ENCODE measurements at regions of chr18 and their contacts with region 1.

Region 1: DNA sequence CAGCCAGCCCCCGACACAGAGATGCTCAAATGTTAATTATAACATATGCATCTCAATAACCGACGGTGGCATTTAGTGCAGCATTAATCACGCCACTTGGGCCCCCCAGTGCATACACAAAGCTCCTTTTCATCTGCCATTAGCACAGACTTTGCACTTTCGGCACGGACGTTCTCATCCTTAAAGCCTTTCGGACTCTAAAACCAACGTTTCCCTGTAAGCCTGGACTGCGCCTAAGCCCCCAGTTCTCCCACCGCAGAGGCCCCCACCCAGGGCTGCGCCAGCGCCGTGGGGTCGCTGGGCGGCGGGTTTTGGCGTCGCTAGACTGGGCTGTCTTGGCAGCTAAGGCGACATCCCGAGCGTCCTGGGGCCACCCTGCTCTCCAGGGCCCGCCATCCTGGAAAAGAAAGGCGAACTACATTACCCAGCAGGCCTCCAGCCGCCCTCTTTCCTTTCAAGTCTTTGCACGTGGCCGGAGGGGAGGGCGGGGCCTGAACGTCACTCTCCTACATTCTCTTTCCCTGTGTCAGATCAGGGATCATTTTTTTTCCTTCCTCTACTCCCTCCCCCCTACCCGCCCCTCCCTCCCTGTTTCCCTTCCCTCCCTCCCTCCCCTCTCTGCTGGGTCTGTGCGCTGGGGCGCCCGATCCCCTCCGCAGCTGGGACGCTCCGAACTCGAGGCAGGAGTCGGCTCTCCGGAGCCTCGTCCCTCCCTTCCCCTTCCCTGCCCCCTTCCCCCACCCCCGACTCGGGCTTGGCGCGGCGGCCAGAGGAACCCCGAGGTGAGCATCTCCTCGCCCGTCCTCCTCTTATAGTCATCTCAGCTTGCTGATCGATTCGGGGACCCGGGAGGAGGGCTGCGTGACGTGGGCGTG is at the start of gene CTIF:
- DNase-seq: peak; percentile 96
- H3K4me3 Mint-ChIP-seq: peak within 1 kb of the TSS; percentile 89
- H3K27ac Mint-ChIP-seq: peak within 1 kb of the TSS; percentile 35
- H3K4me1 Mint-ChIP-seq: no peaks in the 10 kb centered on the region
- H3K27me3 Mint-ChIP-seq: no peaks in the 10 kb centered on the region
- CTCF ChIP-seq: no peak
- total RNA-seq, gene CTIF: 82.2 and 95.8 TPM in 2 replicates

Region 2: DNA sequence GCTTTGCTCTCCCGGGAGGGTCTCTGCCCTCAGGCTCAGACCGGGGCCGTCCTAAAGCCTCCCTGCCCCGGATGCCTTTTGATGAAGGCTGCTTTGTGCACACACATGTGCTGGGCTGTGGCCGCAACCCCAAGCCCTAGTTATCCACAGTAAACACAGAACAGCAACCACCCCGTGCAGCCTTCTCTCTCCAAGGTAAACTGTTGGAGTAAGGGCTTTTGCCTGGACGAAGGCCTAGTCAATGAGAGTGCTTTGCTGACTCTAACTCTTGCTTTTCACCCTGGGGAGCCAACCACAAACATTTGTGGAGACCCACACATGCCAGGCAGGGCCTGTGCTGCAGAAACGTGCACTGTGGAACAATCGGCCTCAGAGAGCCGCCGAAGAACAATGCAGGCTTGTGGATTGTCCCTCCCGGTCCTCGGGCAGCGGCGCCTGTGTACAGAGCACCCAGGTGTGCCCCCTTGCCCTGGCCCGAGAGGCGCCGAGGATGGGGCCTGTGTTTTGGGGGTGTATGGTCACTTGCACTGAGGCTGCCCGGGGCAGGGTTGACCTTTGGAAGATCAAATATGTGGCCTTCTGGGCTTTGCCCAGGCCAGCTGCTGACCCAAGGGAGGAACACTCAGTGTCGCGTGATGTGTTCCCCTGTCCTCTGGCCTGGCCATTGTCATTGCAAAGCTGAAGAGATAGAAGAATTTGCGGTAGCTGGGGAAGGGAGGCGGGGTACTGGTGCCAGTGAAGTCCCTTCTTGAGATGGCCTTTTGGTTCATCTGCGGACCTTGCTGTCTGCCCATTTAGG is 37.1 kb after region 1 on chr18:
- CTCF ChIA-PET with region 1: no interaction called
- POLR2A ChIA-PET with region 1: no interaction called
- intact Hi-C with region 1: loop called (anchors 5 kb)
- DNase-seq: no peak
- H3K4me3 Mint-ChIP-seq: no peak overlapping the region
- H3K27ac Mint-ChIP-seq: no peak overlapping the region
- H3K4me1 Mint-ChIP-seq: peaks cover 23% of the 10 kb centered on the region
- H3K27me3 Mint-ChIP-seq: no peaks in the 10 kb centered on the region
- CTCF ChIP-seq: no peak

Region 3: GRCh38 chr18:48622911-48623431 is 84.2 kb after region 1 on chr18:
- CTCF ChIA-PET with region 1: no interaction called
- POLR2A ChIA-PET with region 1: no interaction called
- intact Hi-C with region 1: loop called (anchors 2 kb)
- DNase-seq: peak; percentile 25
- H3K4me3 Mint-ChIP-seq: peak overlapping the region; percentile 16
- H3K27ac Mint-ChIP-seq: peak overlapping the region; percentile 87
- H3K4me1 Mint-ChIP-seq: peaks cover 54% of the 10 kb centered on the region
- H3K27me3 Mint-ChIP-seq: no peaks in the 10 kb centered on the region
- CTCF ChIP-seq: no peak

Region 4: GRCh38 chr18:48663931-48664847 is 125.4 kb after region 1 on chr18:
- CTCF ChIA-PET with region 1: interaction called, 4 read pairs
- POLR2A ChIA-PET with region 1: interaction called, 3 read pairs
- intact Hi-C with region 1: loop called (anchors 2 kb)
- DNase-seq: peak; percentile 61
- H3K4me3 Mint-ChIP-seq: no peak overlapping the region
- H3K27ac Mint-ChIP-seq: no peak overlapping the region
- H3K4me1 Mint-ChIP-seq: peaks cover 27% of the 10 kb centered on the region
- H3K27me3 Mint-ChIP-seq: no peaks in the 10 kb centered on the region
- CTCF ChIP-seq: peak; percentile 86